ENCODE measurements at regions of chr1 and their contacts with region 1.

Region 1: GRCh38 chr1:74714429-74715235 is 18.2 kb downstream of the CRYZ start:
- DNase-seq: no peak
- ATAC-seq: no peak
- H3K4me3 ChIP-seq: no peak overlapping the region
- H3K4me3 Mint-ChIP-seq: no peak overlapping the region
- H3K27ac ChIP-seq: no peak overlapping the region
- H3K27ac Mint-ChIP-seq: no peak overlapping the region
- H3K4me1 ChIP-seq: no peaks in the 10 kb centered on the region
- H3K4me1 Mint-ChIP-seq: no peaks in the 10 kb centered on the region
- H3K27me3 ChIP-seq: no peaks in the 10 kb centered on the region
- H3K27me3 Mint-ChIP-seq: no peaks in the 10 kb centered on the region

Region 2: GRCh38 chr1:74733604-74734484 is 19.2 kb after region 1 on chr1:
- CTCF ChIA-PET with region 1: interaction called, 6 to 10 read pairs
- POLR2A ChIA-PET with region 1: no interaction called
- DNase-seq: peak in 24 of 35 experiments; percentile 3 to 79 (median 28)
- ATAC-seq: peak; percentile 62 to 73 (median 68)
- H3K4me3 ChIP-seq: peak overlapping the region; percentile 85 to 100
- H3K4me3 Mint-ChIP-seq: peak overlapping the region; percentile 89 to 96 (median 94)
- H3K27ac ChIP-seq: peak overlapping the region; percentile 88
- H3K27ac Mint-ChIP-seq: peak overlapping the region; percentile 96
- H3K4me1 ChIP-seq: peaks cover 11 to 23% of the 10 kb centered on the region in 2 experiments
- H3K4me1 Mint-ChIP-seq: peaks cover 46 to 58% (median 47%) of the 10 kb centered on the region in 3 donors
- H3K27me3 ChIP-seq: no peaks in the 10 kb centered on the region
- H3K27me3 Mint-ChIP-seq: no peaks in the 10 kb centered on the region

Region 3: DNA sequence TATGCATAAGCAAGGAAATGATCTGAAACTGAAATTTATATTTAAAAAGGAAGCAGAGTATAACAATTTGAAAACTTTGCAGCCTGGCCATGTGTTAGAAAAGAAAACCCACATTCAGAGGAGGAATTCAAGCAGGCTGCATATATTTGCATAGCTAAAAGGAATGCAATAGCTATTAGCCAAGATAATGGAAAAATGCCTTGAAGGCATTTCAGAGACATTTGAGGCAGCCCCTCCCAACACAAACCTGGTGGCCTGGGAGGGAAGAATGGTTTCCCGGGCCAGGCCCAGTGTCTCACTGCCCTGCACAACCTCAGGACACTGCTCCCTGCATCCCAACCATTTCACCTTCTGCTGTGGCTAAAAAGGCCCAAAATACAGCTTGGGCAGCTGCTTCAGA is 155.1 kb after region 1 on chr1:
- CTCF ChIA-PET with region 1: no interaction called
- POLR2A ChIA-PET with region 1: no interaction called
- DNase-seq: no peak
- ATAC-seq: no peak
- H3K4me3 ChIP-seq: no peak overlapping the region
- H3K4me3 Mint-ChIP-seq: no peak overlapping the region
- H3K27ac ChIP-seq: no peak overlapping the region
- H3K27ac Mint-ChIP-seq: no peak overlapping the region
- H3K4me1 ChIP-seq: no peaks in the 10 kb centered on the region
- H3K4me1 Mint-ChIP-seq: no peaks in the 10 kb centered on the region
- H3K27me3 ChIP-seq: no peaks in the 10 kb centered on the region
- H3K27me3 Mint-ChIP-seq: no peaks in the 10 kb centered on the region

Measured in T-cell (primary cell).